Activated CD4-positive, alpha-beta T cell treated with anti-CD3 and anti-CD28 coated beads for 36 hours (primary cell): ENCODE measurements at regions of chr5 and their contacts with region 1.

Region 1: GRCh38 chr5:10283927-10284635 is 23.6 kb downstream of the CMBL start:
- DNase-seq: peak; percentile 89
- ATAC-seq: peak; percentile 94
- H3K4me3 Mint-ChIP-seq: no peak overlapping the region
- H3K27ac Mint-ChIP-seq: no peak overlapping the region
- H3K4me1 Mint-ChIP-seq: peaks cover 14% of the 10 kb centered on the region
- H3K27me3 Mint-ChIP-seq: peaks cover 2% of the 10 kb centered on the region

Region 2: GRCh38 chr5:10262121-10262774 is 21.8 kb before region 1 on chr5:
- CTCF ChIA-PET with region 1: interaction called, 11 read pairs
- POLR2A ChIA-PET with region 1: no interaction called
- intact Hi-C with region 1: no loop called
- DNase-seq: no peak
- ATAC-seq: no peak
- H3K4me3 Mint-ChIP-seq: no peak overlapping the region
- H3K27ac Mint-ChIP-seq: peak overlapping the region; percentile 29
- H3K4me1 Mint-ChIP-seq: peaks cover 14% of the 10 kb centered on the region
- H3K27me3 Mint-ChIP-seq: no peaks in the 10 kb centered on the region

Region 3: DNA sequence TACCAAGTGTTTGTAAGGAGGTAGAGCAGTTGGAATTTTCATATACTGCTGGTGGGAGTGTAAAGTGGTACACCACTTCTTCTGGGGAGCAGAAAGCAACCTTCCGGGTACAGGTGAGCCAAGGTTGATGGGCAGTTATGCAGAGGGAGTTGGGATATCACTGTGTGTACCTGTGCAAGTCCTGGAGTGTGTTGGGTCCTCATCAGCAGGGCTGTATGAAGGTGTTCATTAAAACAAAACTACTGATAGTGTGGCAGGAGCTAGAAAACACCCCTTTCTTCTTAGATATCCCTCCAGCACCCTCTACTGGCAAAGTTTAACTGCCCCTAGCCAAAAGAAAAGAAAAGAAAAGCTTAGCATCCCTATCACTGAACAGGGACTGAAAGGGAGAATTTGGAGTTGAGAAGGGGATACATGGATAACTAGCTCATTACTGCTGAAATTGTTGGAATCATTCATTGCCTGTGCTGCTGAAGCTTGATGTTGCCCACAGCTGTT is 80.2 kb after region 1 on chr5:
- CTCF ChIA-PET with region 1: interaction called, 14 read pairs
- POLR2A ChIA-PET with region 1: interaction called, 3 read pairs
- intact Hi-C with region 1: loop called in 1 of 2 experiments (anchors 1 kb)
- DNase-seq: no peak
- ATAC-seq: peak; percentile 55
- H3K4me3 Mint-ChIP-seq: no peak overlapping the region
- H3K27ac Mint-ChIP-seq: no peak overlapping the region
- H3K4me1 Mint-ChIP-seq: peaks cover 73% of the 10 kb centered on the region
- H3K27me3 Mint-ChIP-seq: no peaks in the 10 kb centered on the region

Region 4: DNA sequence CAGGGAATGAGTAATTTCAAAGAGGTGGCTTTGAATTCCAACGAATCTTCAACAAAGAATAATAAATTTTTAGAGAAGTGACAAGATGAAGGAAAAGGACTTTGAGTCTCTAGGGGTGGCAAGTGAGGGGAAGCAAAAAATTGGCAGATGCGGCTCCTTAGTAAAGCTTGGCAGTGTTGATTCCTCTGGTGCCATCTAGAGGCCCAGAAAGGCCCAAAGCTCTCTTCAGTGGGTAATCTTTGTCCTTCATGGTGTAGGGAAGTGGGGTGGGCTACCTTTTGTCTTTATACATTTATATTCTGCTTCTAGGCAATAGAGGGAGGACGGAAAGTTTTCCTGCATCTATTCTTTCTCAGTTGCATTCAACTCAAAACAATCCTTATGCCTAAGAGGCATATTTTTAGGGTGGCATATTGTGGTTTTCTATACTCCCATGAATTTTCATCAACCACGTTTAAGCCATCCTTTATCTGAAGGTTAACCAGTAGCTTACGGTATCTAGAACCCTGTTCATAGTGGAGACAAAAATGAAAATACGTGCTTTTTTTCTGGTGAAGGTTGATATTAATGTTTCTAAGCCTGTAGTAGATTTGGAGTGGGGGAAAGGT is 140.1 kb after region 1 on chr5:
- CTCF ChIA-PET with region 1: interaction called, 36 read pairs
- POLR2A ChIA-PET with region 1: no interaction called
- intact Hi-C with region 1: loop called (anchors 1 kb)
- DNase-seq: peak; percentile 33
- ATAC-seq: peak; percentile 37
- H3K4me3 Mint-ChIP-seq: no peak overlapping the region
- H3K27ac Mint-ChIP-seq: no peak overlapping the region
- H3K4me1 Mint-ChIP-seq: peaks cover 36% of the 10 kb centered on the region
- H3K27me3 Mint-ChIP-seq: no peaks in the 10 kb centered on the region

Region 5: GRCh38 chr5:10627160-10627701 is 343.1 kb after region 1 on chr5:
- CTCF ChIA-PET with region 1: interaction called, 12 read pairs
- POLR2A ChIA-PET with region 1: no interaction called
- intact Hi-C with region 1: loop called (anchors 1 to 2 kb)
- DNase-seq: peak; percentile 38
- ATAC-seq: no peak
- H3K4me3 Mint-ChIP-seq: peak overlapping the region; percentile 63
- H3K27ac Mint-ChIP-seq: peak overlapping the region; percentile 48
- H3K4me1 Mint-ChIP-seq: peaks cover 32% of the 10 kb centered on the region
- H3K27me3 Mint-ChIP-seq: peaks cover 13% of the 10 kb centered on the region

Region 6: DNA sequence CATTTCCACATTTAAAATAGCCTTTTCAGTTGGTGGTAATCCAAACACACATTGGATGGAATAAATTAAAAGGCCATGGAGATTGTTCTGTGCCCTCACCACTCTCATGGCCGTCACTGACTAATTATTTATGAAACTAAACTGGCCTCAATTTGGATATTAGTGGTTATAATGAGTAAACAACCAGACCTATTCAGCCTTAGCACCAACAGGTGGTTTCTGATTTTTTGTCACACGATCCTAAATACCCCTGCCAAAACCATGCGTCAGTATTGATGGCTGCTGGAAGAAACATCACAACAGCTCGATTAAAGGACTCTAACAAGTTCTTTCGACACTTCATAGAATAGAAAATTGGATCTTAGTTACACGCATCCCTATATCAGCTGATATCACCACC is 753.0 kb after region 1 on chr5:
- CTCF ChIA-PET with region 1: no interaction called
- POLR2A ChIA-PET with region 1: no interaction called
- intact Hi-C with region 1: no loop called
- DNase-seq: no peak
- ATAC-seq: no peak
- H3K4me3 Mint-ChIP-seq: no peak overlapping the region
- H3K27ac Mint-ChIP-seq: no peak overlapping the region
- H3K4me1 Mint-ChIP-seq: no peaks in the 10 kb centered on the region
- H3K27me3 Mint-ChIP-seq: peaks cover 11% of the 10 kb centered on the region